Breast epithelium (tissue), 4 donors: ENCODE measurements at regions of chr5 and their contacts with region 1.

Region 1: DNA sequence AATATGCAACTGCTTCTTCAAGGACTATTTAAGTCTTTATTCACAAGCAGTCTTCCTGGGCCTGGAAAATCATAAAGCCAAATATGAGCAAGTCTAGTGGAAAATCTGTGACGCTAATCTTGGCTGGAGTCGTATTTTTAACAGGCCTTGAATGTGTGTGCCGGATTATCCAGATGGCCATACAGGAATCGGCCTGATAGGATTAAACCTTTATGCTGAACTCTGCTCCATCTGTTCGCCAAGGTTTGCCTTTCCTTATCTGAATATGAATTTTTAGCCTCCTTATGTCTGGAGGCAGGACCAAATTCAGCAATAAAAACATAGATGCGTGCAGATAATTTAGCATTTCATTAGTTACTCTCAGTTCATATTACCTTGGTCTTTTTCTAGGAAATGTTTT is 294.5 kb downstream of the EBF1 start:
- DNase-seq: no peak
- H3K4me3 ChIP-seq: no peak overlapping the region
- H3K27ac ChIP-seq: peak overlapping the region in 1 of 2 donors; percentile 54
- H3K4me1 ChIP-seq: no peaks in the 10 kb centered on the region
- H3K27me3 ChIP-seq: no peaks in the 10 kb centered on the region
- CTCF ChIP-seq: no peak
- POLR2A ChIP-seq: no peak

Region 2: GRCh38 chr5:158142156-158142555 is 663.0 kb before region 1 on chr5:
- intact Hi-C with region 1: no loop called
- DNase-seq: no peak
- H3K4me3 ChIP-seq: no peak overlapping the region
- H3K27ac ChIP-seq: no peak overlapping the region
- H3K4me1 ChIP-seq: no peaks in the 10 kb centered on the region
- H3K27me3 ChIP-seq: no peaks in the 10 kb centered on the region
- CTCF ChIP-seq: no peak
- POLR2A ChIP-seq: no peak

Region 3: GRCh38 chr5:158770506-158770905 is 34.7 kb before region 1 on chr5:
- intact Hi-C with region 1: loop called (anchors 2 kb)
- DNase-seq: no peak
- H3K4me3 ChIP-seq: no peak overlapping the region
- H3K27ac ChIP-seq: peak overlapping the region; percentile 37 to 73
- H3K4me1 ChIP-seq: no peaks in the 10 kb centered on the region
- H3K27me3 ChIP-seq: no peaks in the 10 kb centered on the region
- CTCF ChIP-seq: no peak
- POLR2A ChIP-seq: no peak